AG04449 (cell line): ENCODE measurements at regions of chr2 and their contacts with region 1.

Region 1: GRCh38 chr2:191165176-191165643 is 14.4 kb upstream of the STAT4 start:
- DNase-seq: no peak
- H3K4me3 ChIP-seq: no peak overlapping the region
- CTCF ChIP-seq: peak; percentile 49

Region 2: DNA sequence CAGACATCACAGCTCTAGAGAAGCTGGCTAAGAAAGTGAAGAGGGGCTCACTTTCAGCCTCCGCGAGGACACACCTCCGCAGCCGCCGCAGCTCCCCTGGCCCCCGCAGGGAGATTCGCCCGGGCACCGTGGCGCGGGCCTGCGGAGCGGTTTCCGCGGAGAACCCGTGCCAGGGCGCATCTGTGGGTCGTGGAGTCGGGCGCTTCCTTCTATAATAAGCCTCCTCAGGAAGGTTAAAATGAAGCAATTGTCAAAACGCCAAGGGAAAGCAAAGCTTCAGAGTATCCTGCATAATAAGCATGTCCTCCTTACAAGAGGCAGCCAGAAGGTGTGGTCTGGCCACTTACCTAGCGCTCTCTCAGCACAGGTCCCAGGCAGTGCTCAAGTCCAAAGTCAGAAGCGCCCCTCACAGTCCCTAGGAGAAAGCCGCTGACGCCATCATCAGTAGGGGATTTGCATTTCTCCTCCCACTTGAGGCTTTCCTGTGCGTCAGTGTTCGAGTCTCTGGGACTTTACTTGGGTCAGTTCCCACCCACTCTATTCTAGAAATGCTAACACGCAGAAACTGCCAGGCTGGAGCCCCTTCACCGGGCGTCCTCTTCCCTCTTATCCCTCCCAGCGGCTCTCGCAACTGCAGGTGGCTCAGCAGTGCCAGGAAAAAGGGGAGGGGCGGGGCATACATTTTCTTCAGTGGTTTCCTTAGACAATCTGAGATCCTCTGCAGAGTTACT is 14.4 kb before region 1 on chr2 and contains the start of gene STAT4:
- CTCF ChIA-PET with region 1: interaction called, 32 read pairs
- POLR2A ChIA-PET with region 1: no interaction called
- DNase-seq: no peak
- H3K4me3 ChIP-seq: peak within 1 kb of the TSS; percentile 58
- CTCF ChIP-seq: no peak

Region 3: GRCh38 chr2:191231995-191232394 is 66.8 kb after region 1 on chr2:
- CTCF ChIA-PET with region 1: interaction called, 14 read pairs
- POLR2A ChIA-PET with region 1: no interaction called
- DNase-seq: no peak
- H3K4me3 ChIP-seq: no peak overlapping the region
- CTCF ChIP-seq: peak; percentile 47

Region 4: GRCh38 chr2:191276792-191277465 is 111.7 kb after region 1 on chr2:
- CTCF ChIA-PET with region 1: interaction called, 10 read pairs
- POLR2A ChIA-PET with region 1: no interaction called
- DNase-seq: no peak
- H3K4me3 ChIP-seq: no peak overlapping the region
- CTCF ChIP-seq: no peak

Region 5: GRCh38 chr2:191515551-191515950 is 350.3 kb after region 1 on chr2:
- CTCF ChIA-PET with region 1: interaction called, 40 read pairs
- POLR2A ChIA-PET with region 1: no interaction called
- DNase-seq: no peak
- H3K4me3 ChIP-seq: no peak overlapping the region
- CTCF ChIP-seq: no peak